ENCODE measurements at regions of chr9 and their contacts with region 1.

Region 1: DNA sequence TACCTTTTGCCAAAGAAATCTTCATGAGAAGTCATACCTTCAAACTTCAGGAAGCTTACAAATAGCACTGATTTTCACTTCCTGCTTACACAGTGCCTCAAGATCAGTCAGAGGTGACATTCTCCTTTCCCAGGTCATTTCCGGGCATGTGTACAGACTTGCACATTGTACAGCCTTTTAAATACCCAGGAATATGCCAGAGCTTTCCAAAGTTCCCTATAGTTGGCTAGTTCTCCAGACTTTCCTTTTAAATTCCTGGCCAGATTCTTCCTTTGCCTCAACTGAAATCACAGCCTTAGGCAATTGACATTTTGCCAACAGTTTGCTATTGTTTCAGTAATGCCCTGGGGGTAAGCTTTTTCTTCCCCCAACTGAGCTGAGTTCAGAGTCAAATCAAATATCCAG is 47.2 kb downstream of the RFX3 start:
- DNase-seq: peak; percentile 50
- H3K4me3 Mint-ChIP-seq: peak overlapping the region; percentile 43
- H3K27ac Mint-ChIP-seq: peak overlapping the region; percentile 83
- H3K4me1 Mint-ChIP-seq: peaks cover 72% of the 10 kb centered on the region
- H3K27me3 Mint-ChIP-seq: no peaks in the 10 kb centered on the region

Region 2: DNA sequence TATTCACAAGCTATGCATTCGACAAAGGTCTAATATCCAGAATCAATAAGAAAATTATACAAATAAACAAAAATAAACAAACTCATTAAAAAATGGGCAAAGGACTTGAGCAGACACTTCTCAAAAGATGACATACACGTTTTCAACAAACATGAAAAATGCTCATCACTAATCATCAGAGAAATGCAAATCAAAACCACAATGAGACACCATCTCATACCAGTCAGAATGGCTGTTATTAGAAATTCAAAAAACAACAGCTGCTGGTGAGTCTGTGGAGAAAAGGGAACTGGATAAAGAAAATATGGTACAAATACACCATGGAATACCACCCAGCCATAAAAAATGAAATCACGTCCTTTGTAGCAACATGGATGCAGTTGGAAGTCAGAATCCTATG is 589.5 kb before region 1 on chr9:
- CTCF ChIA-PET with region 1: no interaction called
- intact Hi-C with region 1: no loop called
- DNase-seq: no peak
- H3K4me3 Mint-ChIP-seq: no peak overlapping the region
- H3K27ac Mint-ChIP-seq: no peak overlapping the region
- H3K4me1 Mint-ChIP-seq: no peaks in the 10 kb centered on the region
- H3K27me3 Mint-ChIP-seq: peaks cover 34% of the 10 kb centered on the region

Region 3: DNA sequence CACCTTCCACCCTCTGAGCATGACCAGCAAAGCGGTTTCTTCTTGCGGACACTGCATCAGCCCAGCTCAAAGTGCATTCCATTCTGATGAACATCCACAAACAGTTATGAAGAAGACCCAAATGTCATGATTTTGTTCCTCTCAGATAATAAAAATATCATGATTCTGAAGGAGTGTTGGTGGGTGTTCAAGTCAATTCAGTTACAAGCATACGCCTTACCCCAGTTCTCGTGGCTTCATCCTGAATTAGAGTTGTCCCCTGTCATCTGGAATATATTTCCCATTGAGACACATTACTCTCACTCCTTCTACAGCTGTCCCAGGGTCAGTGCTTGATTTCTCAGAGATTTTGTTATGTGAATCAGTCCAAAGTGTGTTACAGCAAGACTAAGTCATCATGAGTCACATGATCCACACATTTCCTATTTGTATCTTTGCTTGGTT is 278.2 kb before region 1 on chr9:
- CTCF ChIA-PET with region 1: no interaction called
- intact Hi-C with region 1: no loop called
- DNase-seq: no peak
- H3K4me3 Mint-ChIP-seq: no peak overlapping the region
- H3K27ac Mint-ChIP-seq: no peak overlapping the region
- H3K4me1 Mint-ChIP-seq: no peaks in the 10 kb centered on the region
- H3K27me3 Mint-ChIP-seq: peaks cover 16% of the 10 kb centered on the region

Region 4: DNA sequence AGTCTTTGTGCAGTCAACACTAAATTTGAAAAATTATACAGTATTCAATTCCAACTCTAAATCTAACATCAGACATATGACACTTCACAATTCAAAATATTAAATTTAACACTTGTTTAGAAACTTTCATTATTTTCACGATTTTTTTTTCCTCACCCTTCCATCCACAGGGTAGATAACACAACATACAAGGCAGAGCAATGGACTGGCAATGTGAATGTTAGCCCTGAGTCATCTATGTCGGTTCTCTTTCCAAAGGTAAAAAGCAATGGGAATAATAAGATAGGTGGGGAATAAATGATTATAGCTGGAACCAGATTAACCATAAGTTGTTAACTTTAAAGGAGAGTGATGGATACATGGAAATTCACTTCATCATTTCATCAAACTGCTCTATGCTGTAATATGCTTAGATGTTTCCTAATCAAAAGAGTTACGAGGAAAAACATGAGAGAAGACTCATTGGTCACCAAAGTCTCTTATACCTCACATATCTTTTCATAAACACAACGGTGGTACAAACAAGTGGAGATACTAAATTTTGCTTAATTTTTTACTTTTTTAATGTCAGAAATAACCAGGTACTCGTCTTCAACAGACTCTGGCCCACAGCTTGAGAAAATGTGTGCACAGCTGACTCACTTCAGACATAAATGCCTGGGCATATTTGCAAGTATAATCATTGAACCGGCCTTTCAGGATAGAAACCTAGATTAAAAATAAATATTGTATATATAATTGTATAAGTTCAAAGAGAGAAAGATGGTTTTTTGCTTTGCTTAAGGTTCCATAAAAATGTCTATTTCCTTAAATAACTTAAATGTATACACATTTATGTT is 24.2 kb after region 1 on chr9:
- CTCF ChIA-PET with region 1: interaction called, 6 read pairs
- intact Hi-C with region 1: loop called (anchors 1 kb)
- DNase-seq: no peak
- H3K4me3 Mint-ChIP-seq: no peak overlapping the region
- H3K27ac Mint-ChIP-seq: no peak overlapping the region
- H3K4me1 Mint-ChIP-seq: peaks cover 44% of the 10 kb centered on the region
- H3K27me3 Mint-ChIP-seq: no peaks in the 10 kb centered on the region

Region 5: GRCh38 chr9:3508521-3509291 is 30.2 kb after region 1 on chr9:
- CTCF ChIA-PET with region 1: interaction called, 5 read pairs
- intact Hi-C with region 1: loop called (anchors 1 kb)
- DNase-seq: no peak
- H3K4me3 Mint-ChIP-seq: peak overlapping the region; percentile 51
- H3K27ac Mint-ChIP-seq: peak overlapping the region; percentile 85
- H3K4me1 Mint-ChIP-seq: peaks cover 63% of the 10 kb centered on the region
- H3K27me3 Mint-ChIP-seq: no peaks in the 10 kb centered on the region

Region 6: DNA sequence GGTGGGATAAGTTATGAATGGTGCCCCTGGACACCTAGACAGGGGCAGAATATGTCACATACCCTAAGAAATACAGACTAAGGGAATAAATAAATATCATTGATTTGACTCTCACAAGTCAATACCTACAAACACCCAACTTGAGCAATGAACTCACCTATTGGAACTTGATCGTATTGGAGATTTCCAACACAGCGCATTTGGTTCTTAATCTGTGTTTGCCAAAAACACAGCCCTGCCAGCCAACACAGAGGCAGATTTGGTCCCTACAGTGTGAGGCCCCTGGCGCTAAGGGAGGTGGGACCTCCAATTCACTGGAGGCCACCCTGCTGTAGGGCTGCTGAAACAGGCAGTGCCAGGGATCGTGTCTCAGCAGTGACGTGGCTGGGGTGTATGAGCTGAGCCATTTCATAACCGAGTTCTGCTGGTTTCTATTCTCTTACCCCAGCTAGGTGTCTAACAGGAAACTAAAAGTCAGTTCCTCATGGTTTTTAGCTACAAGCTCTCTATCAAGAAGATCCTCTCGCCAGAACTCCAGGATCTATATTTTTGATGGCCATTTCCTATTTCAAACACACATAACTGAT is 1096.2 kb after region 1 on chr9:
- CTCF ChIA-PET with region 1: no interaction called
- intact Hi-C with region 1: loop called (anchors 5 kb)
- DNase-seq: no peak
- H3K4me3 Mint-ChIP-seq: no peak overlapping the region
- H3K27ac Mint-ChIP-seq: no peak overlapping the region
- H3K4me1 Mint-ChIP-seq: peaks cover 13% of the 10 kb centered on the region
- H3K27me3 Mint-ChIP-seq: no peaks in the 10 kb centered on the region